ENCODE measurements at regions of chr19 and their contacts with region 1.

Region 1: DNA sequence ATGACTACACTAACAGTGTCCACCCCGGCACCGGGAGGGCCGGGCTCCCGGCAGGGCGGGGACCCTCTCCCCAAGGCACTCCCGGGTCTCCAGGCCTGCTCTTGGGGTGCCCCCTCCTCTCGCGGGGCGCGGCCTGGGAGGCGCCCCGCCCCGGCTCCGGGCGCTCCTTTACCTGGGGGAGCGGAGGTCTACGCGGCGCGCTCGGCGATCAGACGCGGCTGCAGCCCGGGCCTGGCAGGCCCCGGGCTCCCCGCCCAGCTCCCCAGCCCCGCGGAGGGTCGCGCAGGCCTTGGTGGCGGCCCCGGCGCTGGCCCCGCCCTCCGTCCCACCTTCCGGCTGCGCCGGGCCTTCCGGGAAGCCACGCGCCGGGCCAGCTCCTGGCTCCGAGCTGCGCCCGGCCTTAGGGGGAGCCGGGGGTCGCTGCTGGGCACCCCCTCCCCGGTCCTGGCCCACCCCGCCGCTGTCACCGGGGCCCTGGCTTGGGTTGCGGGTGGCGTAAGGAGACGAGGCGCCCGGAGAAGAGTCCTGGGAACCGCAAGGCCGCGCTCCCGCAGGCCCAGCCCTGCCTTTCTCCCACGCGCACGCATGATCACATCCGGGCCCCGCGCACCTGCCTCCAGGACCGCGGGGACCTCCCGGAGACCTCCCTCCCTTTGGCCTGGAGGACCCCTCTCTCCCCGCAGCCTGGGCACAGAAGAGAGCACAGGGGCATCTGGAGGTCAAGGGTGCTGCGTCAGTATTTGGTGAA is at the start of gene C19orf12:
- DNase-seq: peak; percentile 75
- ATAC-seq: peak; percentile 62
- H3K4me3 Mint-ChIP-seq: peak within 1 kb of the TSS; percentile 97
- H3K27ac Mint-ChIP-seq: peak within 1 kb of the TSS; percentile 98
- H3K4me1 Mint-ChIP-seq: peaks cover 46% of the 10 kb centered on the region
- H3K27me3 Mint-ChIP-seq: no peaks in the 10 kb centered on the region
- CTCF ChIP-seq: no peak
- total RNA-seq, gene C19orf12: 33.3 to 36.6 TPM

Region 2: DNA sequence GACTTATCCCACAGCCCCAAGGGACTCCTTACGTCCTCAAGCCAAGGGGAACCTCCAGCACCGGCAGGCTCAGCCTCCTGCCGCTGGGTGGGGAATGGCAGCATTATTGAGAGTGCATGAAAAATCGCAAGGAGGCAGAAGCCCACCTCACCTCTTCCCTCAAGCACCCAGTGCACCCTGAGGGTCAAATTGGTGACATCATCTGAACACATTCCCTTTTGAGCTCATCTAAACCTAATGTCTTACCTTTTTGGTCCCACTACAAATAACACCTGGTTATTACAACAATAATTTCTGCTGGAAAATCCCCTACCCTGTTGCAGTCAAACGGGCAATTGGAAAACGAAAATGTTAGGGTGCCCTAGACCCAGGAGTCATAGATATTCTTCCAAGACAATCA is 121.3 kb before region 1 on chr19:
- CTCF ChIA-PET with region 1: no interaction called
- POLR2A ChIA-PET with region 1: no interaction called
- intact Hi-C with region 1: no loop called
- DNase-seq: no peak
- ATAC-seq: no peak
- H3K4me3 Mint-ChIP-seq: no peak overlapping the region
- H3K27ac Mint-ChIP-seq: no peak overlapping the region
- H3K4me1 Mint-ChIP-seq: no peaks in the 10 kb centered on the region
- H3K27me3 Mint-ChIP-seq: peaks cover 25% of the 10 kb centered on the region
- CTCF ChIP-seq: no peak

Region 3: DNA sequence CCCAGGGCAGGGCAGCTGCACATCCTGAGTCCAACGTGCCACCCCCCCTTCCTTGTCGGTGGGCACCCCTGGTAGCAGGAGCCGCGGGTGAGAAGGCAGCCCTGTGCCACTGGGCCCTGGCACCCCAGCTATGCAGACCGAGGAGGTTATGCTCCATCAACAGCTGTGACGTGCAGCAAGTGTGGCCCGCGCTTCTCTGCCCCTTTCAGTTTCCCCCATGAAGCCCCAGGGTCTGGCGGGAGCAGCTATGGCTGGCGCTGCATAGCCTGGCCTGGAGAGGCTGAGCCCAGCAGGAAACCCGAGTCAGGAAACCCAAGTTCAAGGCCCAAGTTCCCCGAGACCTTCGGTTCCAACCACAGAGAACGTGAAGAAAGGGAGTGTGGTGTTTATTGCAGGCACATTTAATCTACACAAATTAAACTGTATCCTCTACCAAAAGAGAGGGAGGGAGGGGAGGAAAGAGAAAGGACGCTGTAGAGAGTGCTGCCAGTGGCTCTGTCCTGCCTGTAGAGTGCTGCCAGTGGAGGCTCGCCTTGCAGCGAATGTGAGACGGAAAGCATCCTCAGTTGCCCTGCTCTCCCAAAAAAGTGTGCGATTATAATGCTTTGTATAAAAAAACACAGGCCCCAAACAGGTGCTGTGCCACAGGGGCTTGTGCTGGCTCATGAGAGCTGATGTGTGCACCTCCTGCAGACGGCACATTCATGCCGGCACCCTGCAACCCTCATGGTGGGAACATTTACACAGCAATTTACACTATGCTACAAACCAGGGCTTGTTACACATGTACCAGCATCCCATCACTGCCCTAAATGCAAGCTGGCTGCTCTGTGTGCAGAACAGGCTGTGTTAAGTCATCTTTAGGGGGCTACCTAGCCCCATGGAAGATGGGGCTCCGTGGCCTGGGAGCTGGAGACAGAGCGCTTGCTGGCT is 92.7 kb before region 1 on chr19:
- CTCF ChIA-PET with region 1: interaction called, 14 read pairs
- POLR2A ChIA-PET with region 1: interaction called, 15 read pairs
- intact Hi-C with region 1: no loop called
- DNase-seq: peak; percentile 64
- ATAC-seq: peak; percentile 57
- H3K4me3 Mint-ChIP-seq: peak overlapping the region; percentile 20
- H3K27ac Mint-ChIP-seq: peak overlapping the region; percentile 83
- H3K4me1 Mint-ChIP-seq: peaks cover 51% of the 10 kb centered on the region
- H3K27me3 Mint-ChIP-seq: no peaks in the 10 kb centered on the region
- CTCF ChIP-seq: no peak

Region 4: GRCh38 chr19:29671393-29672160 is 43.5 kb before region 1 on chr19:
- CTCF ChIA-PET with region 1: interaction called, 31 read pairs
- POLR2A ChIA-PET with region 1: interaction called, 18 read pairs
- intact Hi-C with region 1: no loop called
- DNase-seq: peak; percentile 96
- ATAC-seq: peak; percentile 66
- H3K4me3 Mint-ChIP-seq: peak overlapping the region; percentile 52
- H3K27ac Mint-ChIP-seq: peak overlapping the region; percentile 90
- H3K4me1 Mint-ChIP-seq: peaks cover 89% of the 10 kb centered on the region
- H3K27me3 Mint-ChIP-seq: no peaks in the 10 kb centered on the region
- CTCF ChIP-seq: peak; percentile 77

Region 5: DNA sequence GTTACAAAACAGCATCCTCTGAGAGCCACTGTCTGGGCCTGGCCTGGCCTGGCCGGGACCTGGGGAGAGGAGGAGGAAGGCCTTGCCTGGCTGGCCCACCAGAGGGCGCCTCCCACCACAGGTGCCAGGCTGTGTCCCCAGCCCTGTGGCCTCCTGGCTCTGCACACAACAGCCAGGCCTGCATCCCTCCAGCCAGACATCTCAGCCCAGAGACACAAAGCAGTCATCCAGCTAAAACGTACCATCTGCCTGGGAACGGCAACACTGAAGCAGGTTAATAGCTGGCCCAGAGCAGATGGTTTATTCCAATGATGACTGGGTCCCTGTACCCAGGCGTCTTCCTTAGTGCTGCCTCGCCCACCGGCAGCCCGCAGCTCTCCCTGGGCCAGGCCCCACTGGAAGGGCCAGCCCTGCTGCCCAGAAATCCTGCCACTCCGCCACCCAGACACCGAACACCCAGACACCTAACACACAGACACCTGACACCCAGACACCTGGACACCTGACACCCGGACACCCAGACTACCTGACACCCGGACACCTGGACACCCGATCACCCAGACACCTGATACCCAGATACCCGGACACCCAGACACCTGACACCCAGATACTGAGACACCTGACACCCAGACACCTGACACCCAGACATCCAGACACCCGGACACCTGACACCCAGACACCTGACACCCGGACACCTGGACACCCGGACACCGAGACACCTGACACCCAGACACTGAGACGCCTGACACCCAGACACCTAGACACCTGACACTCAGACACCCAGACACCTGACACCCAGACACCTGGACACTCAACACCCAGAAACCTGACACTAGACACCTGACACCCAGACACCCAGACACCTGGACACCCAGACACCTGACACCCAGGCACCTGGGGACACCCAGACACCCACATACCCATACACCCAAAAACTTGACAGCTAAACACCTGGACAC is 20.2 kb before region 1 on chr19:
- CTCF ChIA-PET with region 1: interaction called, 300 read pairs
- POLR2A ChIA-PET with region 1: interaction called, 14 read pairs
- intact Hi-C with region 1: loop called (anchors 2 kb)
- DNase-seq: peak; percentile 91
- ATAC-seq: peak; percentile 96
- H3K4me3 Mint-ChIP-seq: no peak overlapping the region
- H3K27ac Mint-ChIP-seq: peak overlapping the region; percentile 21
- H3K4me1 Mint-ChIP-seq: peaks cover 7% of the 10 kb centered on the region
- H3K27me3 Mint-ChIP-seq: no peaks in the 10 kb centered on the region
- CTCF ChIP-seq: peak; percentile 96

Region 6: DNA sequence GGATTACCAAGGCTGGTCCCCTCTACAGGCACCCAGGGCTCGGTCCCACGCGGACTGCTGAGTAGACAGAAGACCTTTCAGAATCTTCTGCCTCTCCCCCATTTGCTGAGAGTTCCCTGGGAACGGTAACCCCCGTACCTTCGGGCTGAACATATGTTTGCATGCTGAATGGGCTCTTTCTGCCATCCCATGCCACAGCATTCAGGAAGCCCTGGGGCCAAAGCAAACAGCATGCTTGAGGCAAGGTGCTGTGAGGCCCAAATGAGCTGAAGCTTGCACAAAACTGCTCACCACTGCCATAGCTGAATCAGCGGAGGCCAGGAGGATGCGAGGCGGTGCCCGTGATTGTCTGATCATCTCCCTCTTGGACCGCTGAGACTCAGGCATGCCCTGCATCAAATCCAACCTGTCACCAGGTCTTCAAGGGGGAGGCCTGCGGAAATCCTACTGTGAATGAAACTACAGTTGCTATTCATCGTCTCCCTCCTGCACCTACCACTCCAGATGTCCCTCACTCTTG is 16.3 kb after region 1 on chr19:
- CTCF ChIA-PET with region 1: interaction called, 16 read pairs
- POLR2A ChIA-PET with region 1: interaction called, 7 read pairs
- intact Hi-C with region 1: no loop called
- DNase-seq: no peak
- ATAC-seq: no peak
- H3K4me3 Mint-ChIP-seq: no peak overlapping the region
- H3K27ac Mint-ChIP-seq: no peak overlapping the region
- H3K4me1 Mint-ChIP-seq: no peaks in the 10 kb centered on the region
- H3K27me3 Mint-ChIP-seq: peaks cover 2% of the 10 kb centered on the region
- CTCF ChIP-seq: no peak